Heart left ventricle (tissue), 16 donors: ENCODE measurements at regions of chr13 and their contacts with region 1.

Region 1: GRCh38 chr13:60969656-60970055 is 446.0 kb downstream of the PCDH20 start:
- DNase-seq: no peak
- ATAC-seq: peak in 3 of 4 donors; percentile 37 to 69 (median 39)
- H3K4me3 ChIP-seq: no peak overlapping the region
- H3K27ac ChIP-seq: peak overlapping the region in 1 of 12 donors; percentile 2
- H3K4me1 ChIP-seq: peaks cover 0 to 11% (median 0%) of the 10 kb centered on the region in 12 donors
- H3K27me3 ChIP-seq: no peaks in the 10 kb centered on the region
- CTCF ChIP-seq: no peak
- POLR2A ChIP-seq: no peak

Region 2: GRCh38 chr13:60288569-60288968 is 681.1 kb before region 1 on chr13:
- intact Hi-C with region 1: no loop called
- DNase-seq: no peak
- ATAC-seq: no peak
- H3K4me3 ChIP-seq: no peak overlapping the region
- H3K27ac ChIP-seq: no peak overlapping the region
- H3K4me1 ChIP-seq: no peaks in the 10 kb centered on the region
- H3K27me3 ChIP-seq: peaks cover 0 to 4% (median 0%) of the 10 kb centered on the region in 9 donors
- CTCF ChIP-seq: no peak
- POLR2A ChIP-seq: no peak

Region 3: GRCh38 chr13:60617991-60618733 is 351.5 kb before region 1 on chr13:
- intact Hi-C with region 1: no loop called
- DNase-seq: no peak
- ATAC-seq: no peak
- H3K4me3 ChIP-seq: no peak overlapping the region
- H3K27ac ChIP-seq: no peak overlapping the region
- H3K4me1 ChIP-seq: no peaks in the 10 kb centered on the region
- H3K27me3 ChIP-seq: peaks cover 0 to 4% (median 0%) of the 10 kb centered on the region in 9 donors
- CTCF ChIP-seq: peak in 4 of 12 donors; percentile 15 to 30 (median 26)
- POLR2A ChIP-seq: no peak

Region 4: DNA sequence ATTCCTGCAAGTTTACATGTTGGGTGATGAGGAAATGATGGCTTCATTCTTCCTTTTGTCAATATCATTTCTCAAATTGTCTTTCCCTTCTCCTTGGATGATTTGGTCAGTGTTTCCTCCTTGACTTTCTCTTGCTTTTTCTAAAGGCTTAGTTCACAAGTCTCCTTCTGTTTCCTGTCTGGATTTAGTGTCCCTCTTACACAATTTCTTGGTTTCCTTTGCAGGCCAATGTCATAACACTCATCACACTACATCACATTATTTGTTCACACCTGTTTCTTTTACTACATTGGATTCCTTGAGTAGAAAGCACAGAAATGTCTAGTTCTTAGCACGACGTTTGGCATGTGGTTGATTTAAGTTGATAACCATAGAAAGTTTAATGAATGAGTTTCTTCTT is 81.9 kb before region 1 on chr13:
- intact Hi-C with region 1: no loop called
- DNase-seq: no peak
- ATAC-seq: no peak
- H3K4me3 ChIP-seq: no peak overlapping the region
- H3K27ac ChIP-seq: no peak overlapping the region
- H3K4me1 ChIP-seq: no peaks in the 10 kb centered on the region
- H3K27me3 ChIP-seq: no peaks in the 10 kb centered on the region
- CTCF ChIP-seq: no peak
- POLR2A ChIP-seq: no peak

Region 5: GRCh38 chr13:61162636-61163035 is 193.0 kb after region 1 on chr13:
- intact Hi-C with region 1: loop called in 1 of 10 experiments (anchors 10 kb)
- DNase-seq: no peak
- ATAC-seq: peak; percentile 86 to 95 (median 92)
- H3K4me3 ChIP-seq: no peak overlapping the region
- H3K27ac ChIP-seq: peak overlapping the region in 9 of 12 donors; percentile 42 to 81 (median 59)
- H3K4me1 ChIP-seq: peaks cover 0 to 21% (median 7%) of the 10 kb centered on the region in 12 donors
- H3K27me3 ChIP-seq: no peaks in the 10 kb centered on the region
- CTCF ChIP-seq: no peak
- POLR2A ChIP-seq: no peak